ENCODE measurements at regions of chr4 and their contacts with region 1.

Region 1: GRCh38 chr4:57043347-57044251 is 64.9 kb downstream of the POLR2B start:
- DNase-seq: no peak
- ATAC-seq: peak; percentile 78
- H3K4me3 ChIP-seq: no peak overlapping the region
- H3K27ac ChIP-seq: peak overlapping the region; percentile 96 to 100
- H3K4me1 ChIP-seq: peaks cover 5 to 22% of the 10 kb centered on the region in 2 donors
- H3K27me3 ChIP-seq: no peaks in the 10 kb centered on the region

Region 2: DNA sequence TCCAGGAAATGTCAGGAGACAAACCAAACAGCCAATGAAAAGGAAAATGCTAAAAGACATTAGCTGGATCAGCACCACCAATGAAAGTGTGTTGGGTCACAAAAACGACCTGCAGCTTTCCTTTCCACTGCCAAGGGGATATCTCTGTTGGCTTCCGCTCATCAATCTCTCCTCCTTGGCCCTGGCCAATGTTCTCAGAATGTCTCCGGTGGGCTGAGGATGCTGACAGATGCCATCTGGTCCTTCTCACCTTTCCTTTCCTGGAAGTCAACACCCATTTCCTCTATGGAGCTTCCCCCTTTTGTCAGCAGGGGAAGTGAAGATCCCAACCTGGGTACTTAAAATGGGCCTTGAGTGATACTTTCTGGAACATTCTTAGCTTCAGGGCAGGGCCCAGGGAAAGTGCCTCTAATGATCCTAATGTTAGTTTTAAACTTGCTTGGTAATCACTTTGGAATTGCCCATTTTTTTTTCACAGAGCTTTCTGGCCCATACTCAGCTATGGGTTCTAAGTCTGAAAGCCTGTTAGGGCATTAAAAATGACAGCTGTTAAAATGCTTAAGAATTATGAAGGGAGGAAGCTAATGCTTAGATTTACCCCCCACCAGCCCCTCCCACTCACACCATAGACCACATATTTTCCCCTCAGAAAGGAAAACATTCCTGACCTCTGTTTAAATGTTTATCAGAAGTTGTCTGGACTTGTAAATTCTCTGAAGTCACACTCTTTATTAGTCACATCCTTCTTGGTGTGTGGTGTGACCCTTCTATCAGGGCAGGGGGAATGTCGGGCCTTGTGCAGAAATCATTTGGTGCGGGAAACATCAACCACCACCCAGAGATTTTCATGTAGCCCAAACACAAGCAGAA is 37.4 kb after region 1 on chr4:
- intact Hi-C with region 1: loop called in 1 of 2 experiments (anchors 5 kb)
- DNase-seq: peak; percentile 76 to 78
- ATAC-seq: peak; percentile 68
- H3K4me3 ChIP-seq: no peak overlapping the region
- H3K27ac ChIP-seq: peak overlapping the region; percentile 99 to 100
- H3K4me1 ChIP-seq: peaks cover 2 to 16% of the 10 kb centered on the region in 2 donors
- H3K27me3 ChIP-seq: no peaks in the 10 kb centered on the region

Region 3: DNA sequence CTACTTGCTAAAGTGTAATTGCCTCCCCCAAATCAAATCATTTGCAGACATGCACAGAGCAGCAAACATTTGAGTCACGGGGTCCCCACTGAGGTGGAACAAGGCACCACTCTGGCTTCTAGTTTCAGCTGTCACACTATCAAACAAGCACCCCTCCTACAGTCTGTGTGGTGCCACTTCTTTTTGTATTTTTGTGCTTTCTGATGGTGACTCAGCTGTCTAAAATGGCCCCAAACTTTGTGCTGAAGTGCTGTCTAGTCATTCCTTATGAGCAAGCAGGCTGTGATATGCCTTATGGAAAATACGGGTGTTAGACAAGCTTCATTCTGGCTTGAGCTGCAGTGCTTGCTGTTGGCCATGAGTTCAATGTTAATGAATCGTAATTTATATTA is 51.2 kb after region 1 on chr4:
- intact Hi-C with region 1: loop called in 1 of 2 experiments (anchors 5 kb)
- DNase-seq: no peak
- ATAC-seq: peak; percentile 61
- H3K4me3 ChIP-seq: no peak overlapping the region
- H3K27ac ChIP-seq: peak overlapping the region; percentile 89 to 99
- H3K4me1 ChIP-seq: peaks cover 13 to 24% of the 10 kb centered on the region in 2 donors
- H3K27me3 ChIP-seq: no peaks in the 10 kb centered on the region

Measured in aorta (tissue), 5 donors.